AG04449 (cell line): ENCODE measurements at regions of chr14 and their contacts with region 1.

Region 1: GRCh38 chr14:22852940-22853767 is 16.8 kb downstream of the MMP14 start:
- DNase-seq: no peak
- H3K4me3 ChIP-seq: peak overlapping the region; percentile 59
- CTCF ChIP-seq: peak; percentile 93

Region 2: DNA sequence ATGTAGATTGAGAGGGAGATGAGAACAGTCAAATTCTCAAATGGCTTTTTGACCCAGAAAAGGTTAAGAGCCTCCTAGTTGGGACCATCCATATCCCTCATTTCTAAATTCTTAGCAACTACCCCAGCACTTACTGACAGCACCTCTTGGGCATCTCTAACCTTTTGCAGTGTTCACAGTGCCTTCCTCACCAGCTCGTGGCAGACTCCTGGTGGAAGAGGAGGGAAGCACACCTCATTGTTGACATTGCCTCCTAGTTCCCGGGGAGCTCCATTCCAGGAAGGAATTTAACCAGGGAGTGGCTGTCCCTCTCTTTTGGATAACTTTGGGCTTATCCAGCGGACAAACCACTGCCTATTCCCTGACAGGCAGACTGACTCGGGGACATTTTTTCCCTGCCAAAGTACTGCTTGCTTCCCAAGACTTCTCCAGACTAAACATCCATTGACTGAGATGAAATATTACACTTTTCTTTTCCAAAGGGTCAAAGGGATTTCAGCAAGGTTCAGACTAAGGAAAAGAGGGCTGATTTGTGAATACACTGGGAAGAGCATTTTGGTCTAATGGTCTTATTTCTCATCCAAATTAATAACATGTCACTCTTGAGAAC is 200.0 kb before region 1 on chr14:
- CTCF ChIA-PET with region 1: interaction called, 76 read pairs
- POLR2A ChIA-PET with region 1: no interaction called
- DNase-seq: no peak
- H3K4me3 ChIP-seq: no peak overlapping the region
- CTCF ChIP-seq: peak; percentile 94

Region 3: GRCh38 chr14:22773162-22774010 is 79.8 kb before region 1 on chr14:
- CTCF ChIA-PET with region 1: interaction called, 89 read pairs
- POLR2A ChIA-PET with region 1: interaction called, 3 read pairs
- DNase-seq: no peak
- H3K4me3 ChIP-seq: no peak overlapping the region
- CTCF ChIP-seq: no peak

Region 4: GRCh38 chr14:22822571-22823098 is 30.5 kb before region 1 on chr14:
- CTCF ChIA-PET with region 1: interaction called, 256 read pairs
- POLR2A ChIA-PET with region 1: interaction called, 42 read pairs
- DNase-seq: no peak
- H3K4me3 ChIP-seq: peak overlapping the region; percentile 24
- CTCF ChIP-seq: peak; percentile 78

Region 5: GRCh38 chr14:22836301-22837113 is 16.6 kb before region 1 on chr14 and contains the start of gene MMP14:
- CTCF ChIA-PET with region 1: interaction called, 272 read pairs
- POLR2A ChIA-PET with region 1: interaction called, 158 read pairs
- DNase-seq: no peak
- H3K4me3 ChIP-seq: peak within 1 kb of the TSS; percentile 90
- CTCF ChIP-seq: peak; percentile 58

Region 6: DNA sequence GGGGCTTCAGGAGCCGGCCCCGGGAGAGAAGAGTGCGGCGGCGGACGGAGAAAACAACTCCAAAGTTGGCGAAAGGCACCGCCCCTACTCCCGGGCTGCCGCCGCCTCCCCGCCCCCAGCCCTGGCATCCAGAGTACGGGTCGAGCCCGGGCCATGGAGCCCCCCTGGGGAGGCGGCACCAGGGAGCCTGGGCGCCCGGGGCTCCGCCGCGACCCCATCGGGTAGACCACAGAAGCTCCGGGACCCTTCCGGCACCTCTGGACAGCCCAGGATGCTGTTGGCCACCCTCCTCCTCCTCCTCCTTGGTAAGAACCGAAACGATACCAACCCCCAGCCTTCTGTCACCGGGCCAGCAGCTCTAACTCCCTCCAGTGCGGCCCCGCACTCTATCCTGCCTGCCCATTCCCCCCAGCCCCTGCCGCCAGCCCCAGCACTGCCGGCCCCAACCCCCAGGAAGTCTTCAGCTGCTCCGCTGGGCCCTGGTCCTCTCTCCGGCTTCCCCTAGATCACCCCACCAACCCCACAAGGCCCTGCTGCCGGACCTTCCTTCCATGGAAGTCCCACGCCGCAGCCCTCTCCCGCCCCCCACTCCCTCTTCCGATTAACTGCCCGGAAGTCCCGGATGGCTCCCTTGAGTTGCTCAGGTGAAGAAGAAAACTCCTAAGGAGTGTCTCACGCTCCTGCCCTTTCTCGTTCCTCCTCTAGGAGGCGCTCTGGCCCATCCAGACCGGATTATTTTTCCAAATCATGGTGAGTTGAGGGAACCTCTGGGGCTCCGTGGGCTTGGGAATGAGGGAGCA is 19.1 kb after region 1 on chr14:
- CTCF ChIA-PET with region 1: interaction called, 96 read pairs
- POLR2A ChIA-PET with region 1: interaction called, 13 read pairs
- DNase-seq: no peak
- H3K4me3 ChIP-seq: peak overlapping the region; percentile 81
- CTCF ChIP-seq: peak; percentile 87